ENCODE measurements at regions of chr3 and their contacts with region 1.

Region 1: DNA sequence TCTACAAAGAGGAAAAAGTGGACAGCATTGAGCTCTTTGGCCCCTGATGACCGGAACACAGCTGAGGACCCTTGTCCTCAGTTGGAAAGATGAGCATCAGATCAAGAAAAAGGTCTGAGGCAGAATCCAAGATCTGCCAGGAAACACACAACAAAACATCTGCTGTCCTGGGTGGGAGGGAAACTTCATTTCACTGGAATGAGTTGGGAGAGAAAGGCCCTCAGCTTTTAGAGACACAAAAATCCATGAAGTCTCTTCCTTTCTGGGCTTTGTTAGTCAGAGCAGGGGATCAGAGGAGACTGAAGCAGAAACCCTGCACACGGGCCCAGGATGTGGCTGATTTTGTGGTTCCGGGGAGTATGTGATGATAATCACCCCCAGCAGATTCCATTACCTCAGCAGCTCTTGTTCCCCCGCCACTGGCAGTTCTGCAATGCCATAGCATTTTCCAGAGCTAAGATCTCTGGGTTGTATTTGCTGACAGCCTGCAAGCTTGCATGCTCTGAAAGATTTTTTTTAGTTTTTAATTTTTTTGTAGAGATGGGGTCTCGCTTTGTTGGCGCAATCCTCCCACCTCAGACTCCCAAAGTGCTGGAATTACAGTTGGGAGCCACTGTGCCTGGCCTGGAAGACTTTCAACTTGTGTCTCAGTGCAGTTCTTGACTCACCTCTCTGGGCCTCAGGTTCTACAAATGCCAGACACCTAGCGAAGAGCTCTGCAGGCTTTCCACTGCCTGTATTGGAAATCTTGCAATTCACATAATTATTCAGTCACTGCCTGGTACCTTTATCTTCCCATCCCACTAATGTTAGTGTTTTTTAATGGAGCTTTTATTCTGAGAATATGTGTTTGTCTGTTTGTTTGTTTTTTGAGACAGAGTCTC is 5.8 kb upstream of the TATDN2 start:
- DNase-seq: peak; percentile 20 to 93 (median 84)
- ATAC-seq: peak; percentile 98
- H3K4me3 ChIP-seq: peak overlapping the region; percentile 13
- H3K4me3 Mint-ChIP-seq: peak overlapping the region; percentile 75 to 82 (median 77)
- H3K27ac ChIP-seq: peak overlapping the region; percentile 71
- H3K27ac Mint-ChIP-seq: peak overlapping the region; percentile 86 to 96 (median 93)
- H3K4me1 ChIP-seq: peaks cover 33 to 43% of the 10 kb centered on the region in 2 donors
- H3K4me1 Mint-ChIP-seq: peaks cover 40 to 60% (median 54%) of the 10 kb centered on the region in 7 donors
- H3K27me3 ChIP-seq: no peaks in the 10 kb centered on the region
- H3K27me3 Mint-ChIP-seq: no peaks in the 10 kb centered on the region

Region 2: GRCh38 chr3:10180738-10181295 is 61.6 kb before region 1 on chr3:
- CTCF ChIA-PET with region 1: no interaction called
- POLR2A ChIA-PET with region 1: no interaction called
- intact Hi-C with region 1: no loop called
- DNase-seq: no peak
- ATAC-seq: no peak
- H3K4me3 ChIP-seq: no peak overlapping the region
- H3K4me3 Mint-ChIP-seq: no peak overlapping the region
- H3K27ac ChIP-seq: no peak overlapping the region
- H3K27ac Mint-ChIP-seq: peak overlapping the region in 3 of 9 donors; percentile 6 to 43 (median 31)
- H3K4me1 ChIP-seq: peaks cover 2 to 3% of the 10 kb centered on the region in 2 donors
- H3K4me1 Mint-ChIP-seq: peaks cover 3 to 31% (median 18%) of the 10 kb centered on the region in 7 donors
- H3K27me3 ChIP-seq: no peaks in the 10 kb centered on the region
- H3K27me3 Mint-ChIP-seq: no peaks in the 10 kb centered on the region

Region 3: GRCh38 chr3:10192953-10193691 is 49.3 kb before region 1 on chr3:
- CTCF ChIA-PET with region 1: interaction called, 6 read pairs
- POLR2A ChIA-PET with region 1: interaction called, 8 read pairs
- intact Hi-C with region 1: loop called (anchors 1 kb)
- DNase-seq: peak in 8 of 9 donors; percentile 35 to 68 (median 62)
- ATAC-seq: peak; percentile 24
- H3K4me3 ChIP-seq: peak overlapping the region; percentile 34
- H3K4me3 Mint-ChIP-seq: peak overlapping the region; percentile 70 to 90 (median 81)
- H3K27ac ChIP-seq: peak overlapping the region; percentile 75
- H3K27ac Mint-ChIP-seq: peak overlapping the region; percentile 90 to 98 (median 97)
- H3K4me1 ChIP-seq: peaks cover 78 to 86% of the 10 kb centered on the region in 2 donors
- H3K4me1 Mint-ChIP-seq: peaks cover 54 to 92% (median 85%) of the 10 kb centered on the region in 7 donors
- H3K27me3 ChIP-seq: no peaks in the 10 kb centered on the region
- H3K27me3 Mint-ChIP-seq: no peaks in the 10 kb centered on the region

Region 4: GRCh38 chr3:10253731-10254130 is 11.3 kb after region 1 on chr3:
- CTCF ChIA-PET with region 1: no interaction called
- POLR2A ChIA-PET with region 1: interaction called, 14 read pairs
- intact Hi-C with region 1: no loop called
- DNase-seq: no peak
- ATAC-seq: no peak
- H3K4me3 ChIP-seq: no peak overlapping the region
- H3K4me3 Mint-ChIP-seq: peak overlapping the region in 8 of 10 donors; percentile 10 to 96 (median 46)
- H3K27ac ChIP-seq: no peak overlapping the region
- H3K27ac Mint-ChIP-seq: peak overlapping the region; percentile 41 to 88 (median 75)
- H3K4me1 ChIP-seq: peaks cover 32% of the 10 kb centered on the region in 2 donors
- H3K4me1 Mint-ChIP-seq: peaks cover 57 to 90% (median 73%) of the 10 kb centered on the region in 7 donors
- H3K27me3 ChIP-seq: no peaks in the 10 kb centered on the region
- H3K27me3 Mint-ChIP-seq: no peaks in the 10 kb centered on the region

Measured in naive thymus-derived CD4-positive, alpha-beta T cell (primary cell).